BJ (cell line): ENCODE measurements at regions of chr16 and their contacts with region 1.

Region 1: GRCh38 chr16:57422026-57422944 is 17.7 kb downstream of the CCL17 start:
- DNase-seq: no peak
- H3K4me3 ChIP-seq: no peak overlapping the region
- H3K27me3 ChIP-seq: no peaks in the 10 kb centered on the region
- CTCF ChIP-seq: peak; percentile 85

Region 2: GRCh38 chr16:57300387-57301125 is 121.7 kb before region 1 on chr16:
- CTCF ChIA-PET with region 1: interaction called, 461 read pairs
- POLR2A ChIA-PET with region 1: no interaction called
- DNase-seq: peak; percentile 91
- H3K4me3 ChIP-seq: peak overlapping the region; percentile 29
- H3K27me3 ChIP-seq: peaks cover 7% of the 10 kb centered on the region
- CTCF ChIP-seq: peak; percentile 96

Region 3: DNA sequence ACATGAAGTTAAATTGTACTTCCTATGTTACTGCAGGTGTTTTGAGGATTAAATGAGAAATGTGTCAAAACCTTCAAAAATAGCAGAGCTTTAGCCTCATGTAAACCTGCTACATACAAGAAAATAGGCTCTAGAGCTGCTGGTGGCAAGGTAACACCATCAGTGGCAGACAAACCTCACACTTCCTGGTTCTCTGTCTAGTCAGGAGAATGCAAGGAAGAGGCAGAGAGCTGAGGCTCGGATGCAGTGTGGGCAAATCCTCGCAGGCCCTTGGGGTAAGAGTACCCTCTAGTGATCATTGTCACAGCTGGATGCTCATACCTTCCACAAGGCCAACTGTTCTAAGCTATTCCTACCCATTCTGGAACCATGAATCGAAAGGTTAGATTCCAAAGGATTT is 10.7 kb after region 1 on chr16:
- CTCF ChIA-PET with region 1: interaction called, 45 read pairs
- POLR2A ChIA-PET with region 1: no interaction called
- DNase-seq: no peak
- H3K4me3 ChIP-seq: no peak overlapping the region
- H3K27me3 ChIP-seq: no peaks in the 10 kb centered on the region
- CTCF ChIP-seq: no peak

Region 4: DNA sequence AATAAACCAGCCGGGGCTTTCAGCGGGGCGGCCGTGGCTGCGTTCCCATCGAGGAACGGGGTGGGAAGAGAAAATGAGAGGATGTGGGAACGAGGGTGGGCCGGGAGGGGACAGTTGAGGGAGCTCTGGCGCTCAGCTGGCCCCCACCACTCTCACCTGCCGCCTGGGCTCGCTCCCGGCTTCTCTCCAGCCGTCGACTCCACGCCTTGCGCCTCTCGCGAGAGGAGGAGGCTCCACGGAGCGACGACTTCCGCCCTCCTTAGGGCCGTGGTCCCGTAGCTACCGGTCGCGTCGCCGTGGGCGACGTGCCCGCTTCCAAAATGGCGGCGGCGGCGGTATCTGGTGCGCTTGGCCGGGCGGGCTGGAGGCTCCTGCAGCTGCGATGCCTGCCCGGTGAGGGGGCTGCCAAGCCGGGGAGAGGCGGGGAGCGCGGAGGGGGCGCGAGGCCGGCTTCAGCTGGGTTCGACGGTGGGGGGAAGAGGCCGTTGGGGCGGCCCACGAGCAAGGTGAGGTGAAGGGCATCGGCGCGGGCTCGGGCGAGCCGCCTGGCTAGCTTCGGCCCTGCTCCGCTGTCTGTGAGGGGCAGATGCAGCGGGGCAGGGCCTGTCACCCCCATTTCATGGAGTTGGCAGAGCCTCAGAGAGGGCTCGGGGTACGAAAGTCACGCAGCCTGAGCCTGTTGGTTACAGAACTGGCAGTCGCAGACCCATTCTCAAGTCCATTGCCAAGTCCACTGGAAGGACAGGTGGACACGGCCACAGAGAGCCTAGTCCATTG is 25.1 kb after region 1 on chr16 and contains the starts of genes CIAPIN1 and COQ9:
- CTCF ChIA-PET with region 1: interaction called, 12 read pairs
- POLR2A ChIA-PET with region 1: no interaction called
- DNase-seq: peak; percentile 59
- H3K4me3 ChIP-seq: peak within 1 kb of the TSS; percentile 97
- H3K27me3 ChIP-seq: no peaks in the 10 kb centered on the region
- CTCF ChIP-seq: no peak
- polyA plus RNA-seq, gene CIAPIN1: 51.6 and 55.3 TPM in 2 replicates
- polyA plus RNA-seq, gene COQ9: 62.7 and 69.5 TPM in 2 replicates

Region 5: DNA sequence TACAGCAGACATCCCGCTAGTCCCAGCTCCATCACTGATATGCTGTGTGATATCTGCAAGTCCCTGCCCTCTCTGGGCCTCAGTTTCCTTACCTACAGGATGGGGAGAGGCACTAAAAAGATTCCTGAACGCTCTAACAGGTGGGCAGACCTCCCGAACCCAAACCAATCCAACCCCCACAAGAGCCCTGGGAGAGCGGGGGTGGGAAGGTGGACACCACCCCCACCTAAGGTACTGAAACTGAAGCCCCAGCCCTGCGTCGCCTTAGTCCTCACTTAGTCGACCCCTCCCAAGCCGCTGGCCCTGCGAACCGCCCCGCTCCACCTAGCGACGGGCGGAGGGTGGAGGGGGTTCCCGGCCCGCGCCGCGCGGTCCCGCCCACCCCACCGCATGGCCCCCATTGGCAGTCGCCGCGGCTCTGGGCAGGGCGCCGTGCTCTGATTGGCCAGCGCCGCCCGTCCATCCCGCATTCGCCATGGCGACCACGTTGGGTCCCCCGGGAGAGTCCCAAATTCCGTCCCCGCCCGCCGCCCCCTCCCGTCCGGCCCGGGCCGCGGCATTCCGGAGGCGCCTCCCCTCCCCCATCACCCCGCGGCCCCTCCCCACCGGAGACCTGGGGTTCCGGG is 113.5 kb after region 1 on chr16:
- CTCF ChIA-PET with region 1: interaction called, 12 read pairs
- POLR2A ChIA-PET with region 1: no interaction called
- DNase-seq: peak; percentile 50
- H3K4me3 ChIP-seq: peak overlapping the region; percentile 57
- H3K27me3 ChIP-seq: peaks cover 5% of the 10 kb centered on the region; the same call in 1 of the 2 replicates
- CTCF ChIP-seq: peak; percentile 30